ENCODE measurements at regions of chr7 and their contacts with region 1.

Region 1: DNA sequence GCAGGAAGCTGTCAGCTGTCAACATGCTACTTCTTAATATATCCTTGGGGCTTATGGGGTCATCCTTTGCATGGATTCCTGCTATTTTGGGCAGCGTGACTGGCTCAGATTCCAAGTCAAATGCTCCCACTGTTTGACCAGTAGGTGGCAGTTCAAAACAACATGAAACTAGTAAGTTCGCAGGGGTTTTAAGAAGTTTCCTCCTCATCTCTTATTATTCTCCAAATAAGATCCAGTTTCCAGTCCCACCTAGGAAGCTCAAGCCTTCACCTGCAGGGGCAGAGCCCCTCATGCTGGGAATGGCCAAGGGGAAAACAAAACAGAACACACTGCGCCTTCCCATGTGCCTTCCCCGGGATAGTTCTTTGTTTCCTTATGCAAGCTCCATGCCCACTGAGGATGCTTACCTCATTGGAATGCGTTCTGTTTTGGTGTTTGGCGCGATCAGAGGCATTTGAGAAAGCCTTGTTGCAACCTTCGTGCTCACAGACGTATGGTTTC is 259.8 kb downstream of the GLI3 start:
- DNase-seq: no peak
- H3K4me3 ChIP-seq: no peak overlapping the region
- CTCF ChIP-seq: peak; percentile 69

Region 2: GRCh38 chr7:41892356-41893100 is 84.7 kb before region 1 on chr7:
- CTCF ChIA-PET with region 1: no interaction called
- POLR2A ChIA-PET with region 1: no interaction called
- DNase-seq: no peak
- H3K4me3 ChIP-seq: no peak overlapping the region
- CTCF ChIP-seq: peak; percentile 3

Region 3: DNA sequence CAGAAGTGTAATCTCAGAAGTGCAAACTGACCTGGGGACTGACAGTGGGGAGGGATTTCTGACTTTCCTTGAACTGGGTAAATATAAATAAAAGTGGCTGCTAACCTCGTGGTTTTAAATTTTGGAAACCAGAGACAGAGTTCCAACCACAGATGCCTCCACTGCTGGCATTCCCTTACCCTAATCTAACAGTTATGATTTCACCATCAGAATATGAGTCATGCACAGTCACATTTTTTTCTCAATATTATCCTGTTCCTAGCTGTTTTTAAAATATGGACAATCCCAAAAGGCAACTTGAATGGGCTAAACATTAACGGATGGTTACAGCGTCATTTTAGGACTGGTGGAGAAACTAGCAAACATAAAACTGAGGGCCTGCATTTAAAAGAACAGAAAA is 10.0 kb before region 1 on chr7:
- CTCF ChIA-PET with region 1: interaction called, 92 read pairs
- POLR2A ChIA-PET with region 1: no interaction called
- DNase-seq: no peak
- H3K4me3 ChIP-seq: no peak overlapping the region
- CTCF ChIP-seq: no peak

Region 4: GRCh38 chr7:42025635-42026375 is 48.6 kb after region 1 on chr7:
- CTCF ChIA-PET with region 1: interaction called, 28 read pairs
- POLR2A ChIA-PET with region 1: no interaction called
- DNase-seq: no peak
- H3K4me3 ChIP-seq: no peak overlapping the region
- CTCF ChIP-seq: no peak

Region 5: DNA sequence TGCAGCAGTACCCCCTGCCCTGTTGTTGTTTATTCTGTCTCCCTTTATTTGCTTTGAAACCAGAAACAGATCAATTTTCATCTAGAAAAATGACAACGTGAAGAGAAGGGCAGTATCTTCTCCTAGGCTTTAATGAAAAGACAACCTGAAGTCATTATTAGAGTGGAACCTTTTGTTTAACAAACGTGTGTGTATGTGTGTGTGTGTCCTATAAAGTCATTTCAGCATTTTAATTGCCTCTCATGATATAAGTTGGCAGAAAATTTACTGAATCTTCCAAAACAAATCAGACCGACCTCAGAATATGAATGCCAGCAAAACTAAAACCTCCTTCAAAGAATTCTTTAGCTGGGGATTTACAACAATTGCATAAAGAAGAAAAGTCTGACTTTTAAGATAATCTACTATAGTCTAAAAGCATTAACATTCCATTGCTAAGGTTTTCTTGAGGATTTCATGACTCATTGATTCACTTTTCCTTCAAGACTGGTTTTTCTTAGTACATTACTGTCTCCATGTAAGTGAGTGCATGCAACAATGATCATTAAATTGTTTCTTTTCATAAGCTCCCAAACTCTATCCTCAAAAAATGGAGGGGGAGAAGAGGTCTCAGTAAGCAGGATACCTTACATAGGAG is 256.6 kb after region 1 on chr7:
- CTCF ChIA-PET with region 1: interaction called, 29 read pairs
- POLR2A ChIA-PET with region 1: no interaction called
- DNase-seq: no peak
- H3K4me3 ChIP-seq: no peak overlapping the region
- CTCF ChIP-seq: no peak

Region 6: DNA sequence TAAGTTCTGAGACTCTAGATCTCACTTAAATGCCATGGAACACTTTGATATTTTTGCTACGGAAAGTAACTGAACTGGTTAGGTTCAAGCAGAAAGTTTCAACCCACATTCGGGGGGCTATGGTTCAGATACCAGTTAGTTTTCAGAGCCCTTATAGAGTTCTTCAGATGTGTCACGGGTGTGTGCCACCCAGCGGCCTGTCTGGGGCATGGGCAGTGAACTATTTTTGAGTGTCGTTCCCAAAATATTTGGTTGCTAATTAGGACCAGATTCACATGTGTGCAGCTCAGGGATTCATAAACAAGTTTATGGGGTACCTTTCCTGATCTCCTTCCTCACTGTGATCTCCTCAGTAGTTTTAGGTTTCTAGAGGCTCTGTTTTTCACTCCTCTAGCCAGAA is 662.7 kb after region 1 on chr7:
- CTCF ChIA-PET with region 1: interaction called, 11 read pairs
- POLR2A ChIA-PET with region 1: no interaction called
- DNase-seq: no peak
- H3K4me3 ChIP-seq: no peak overlapping the region
- CTCF ChIP-seq: peak; percentile 12

Region 7: DNA sequence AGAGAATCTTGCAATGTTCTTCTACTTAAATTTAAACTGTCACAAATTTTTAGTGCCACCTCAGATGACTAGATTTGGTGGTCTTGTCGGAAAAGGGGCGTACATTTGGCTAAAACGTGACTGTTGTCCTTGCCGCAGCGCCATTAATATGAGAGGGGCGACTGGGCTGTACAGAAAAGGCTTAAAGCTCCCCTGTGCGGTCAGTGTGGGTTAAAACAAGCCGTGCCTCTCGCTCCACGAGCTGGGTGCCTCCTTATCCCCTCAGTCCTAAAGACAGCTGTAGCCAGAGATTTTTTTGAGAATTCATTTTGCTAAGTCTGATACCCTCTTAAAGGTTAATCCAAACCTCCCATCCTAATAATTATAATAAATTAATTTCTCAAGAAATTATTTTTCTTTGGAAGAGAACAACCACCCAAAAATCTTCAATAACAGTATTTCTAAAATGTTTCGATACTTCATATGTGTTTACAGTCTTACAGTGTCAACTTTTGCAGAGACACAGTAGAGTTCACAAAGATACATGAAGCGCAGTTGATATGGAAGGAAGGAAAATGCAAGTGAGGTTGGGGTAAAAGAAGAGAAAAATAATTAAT is 866.1 kb after region 1 on chr7:
- CTCF ChIA-PET with region 1: interaction called, 68 read pairs
- POLR2A ChIA-PET with region 1: no interaction called
- DNase-seq: no peak
- H3K4me3 ChIP-seq: no peak overlapping the region
- CTCF ChIP-seq: peak; percentile 56